Naive thymus-derived CD4-positive, alpha-beta T cell (primary cell): ENCODE measurements at regions of chrX and their contacts with region 1.

Region 1: DNA sequence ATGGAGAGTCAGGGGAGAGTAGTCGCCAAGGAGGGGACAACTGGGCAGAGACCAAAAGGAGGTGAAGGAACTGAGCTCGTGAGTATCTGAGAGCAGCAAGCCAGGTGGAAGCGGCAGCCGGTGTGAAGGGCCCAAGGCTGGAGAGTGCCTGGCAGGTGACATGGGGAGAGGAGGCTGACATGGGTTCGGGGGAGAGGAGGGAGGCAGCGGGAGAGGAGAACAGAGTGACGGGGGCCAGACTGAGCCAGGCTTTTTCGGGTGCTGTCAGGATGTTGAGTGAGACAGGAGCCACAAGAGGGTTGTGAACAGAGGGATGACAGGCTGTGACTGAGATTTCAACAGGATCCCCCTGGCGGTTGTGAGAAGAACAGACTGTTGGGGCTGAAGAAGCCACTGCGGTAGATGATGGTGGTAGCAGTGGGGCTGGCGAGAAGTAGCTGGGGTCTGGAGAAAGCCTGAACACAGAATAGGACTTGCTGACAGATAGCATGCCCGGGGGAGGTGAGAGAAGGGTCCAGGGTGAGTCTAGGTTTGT is 5.7 kb downstream of the ELK1 start:
- DNase-seq: no peak
- ATAC-seq: peak; percentile 60
- H3K4me3 ChIP-seq: no peak overlapping the region
- H3K4me3 Mint-ChIP-seq: peak overlapping the region in 2 of 10 donors; percentile 36 to 39
- H3K27ac ChIP-seq: peak overlapping the region; percentile 21
- H3K27ac Mint-ChIP-seq: peak overlapping the region in 3 of 9 donors; percentile 37 to 56 (median 51)
- H3K4me1 ChIP-seq: peaks cover 9 to 22% of the 10 kb centered on the region in 2 donors
- H3K4me1 Mint-ChIP-seq: peaks cover 31 to 64% (median 51%) of the 10 kb centered on the region in 7 donors
- H3K27me3 ChIP-seq: no peaks in the 10 kb centered on the region
- H3K27me3 Mint-ChIP-seq: no peaks in the 10 kb centered on the region

Region 2: DNA sequence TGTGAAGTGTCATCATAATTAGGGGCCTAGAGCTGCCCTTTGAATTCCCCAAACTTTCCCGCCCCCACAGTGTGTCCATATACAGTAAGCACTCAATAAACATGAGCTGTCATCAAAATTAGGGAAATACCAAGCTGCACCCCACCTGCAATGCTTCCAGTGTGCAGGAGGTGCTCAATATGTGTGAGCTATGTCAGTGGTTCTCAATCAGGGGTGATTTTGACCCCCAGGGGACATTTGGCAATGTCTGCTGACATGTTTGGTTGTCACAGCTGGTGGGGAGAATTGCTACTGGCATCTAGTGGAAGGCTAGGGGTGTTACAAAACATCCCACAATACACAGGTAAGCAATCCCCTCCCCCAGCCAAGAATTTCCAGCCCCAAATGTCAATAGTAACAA is 15.6 kb before region 1 on chrX:
- CTCF ChIA-PET with region 1: interaction called, 15 read pairs
- POLR2A ChIA-PET with region 1: interaction called, 12 read pairs
- intact Hi-C with region 1: no loop called
- DNase-seq: peak in 4 of 9 donors; percentile 14 to 35 (median 30)
- ATAC-seq: peak; percentile 33
- H3K4me3 ChIP-seq: peak overlapping the region; percentile 33
- H3K4me3 Mint-ChIP-seq: peak overlapping the region; percentile 83 to 95 (median 90)
- H3K27ac ChIP-seq: peak overlapping the region; percentile 64
- H3K27ac Mint-ChIP-seq: peak overlapping the region; percentile 72 to 95 (median 89)
- H3K4me1 ChIP-seq: peaks cover 0 to 3% of the 10 kb centered on the region in 2 donors
- H3K4me1 Mint-ChIP-seq: peaks cover 0 to 34% (median 28%) of the 10 kb centered on the region in 7 donors
- H3K27me3 ChIP-seq: no peaks in the 10 kb centered on the region
- H3K27me3 Mint-ChIP-seq: peaks cover 0 to 3% (median 0%) of the 10 kb centered on the region in 5 donors